ENCODE measurements at regions of chr17 and their contacts with region 1.

Region 1: GRCh38 chr17:2215616-2216364 is 87.8 kb downstream of the SMG6 start:
- DNase-seq: peak; percentile 87

Region 2: GRCh38 chr17:2179615-2180295 is 36.0 kb before region 1 on chr17:
- intact Hi-C with region 1: loop called (anchors 2 kb)
- DNase-seq: peak; percentile 81

Region 3: GRCh38 chr17:2266045-2266864 is 50.5 kb after region 1 on chr17:
- intact Hi-C with region 1: no loop called
- DNase-seq: no peak